ENCODE measurements at regions of chr13 and their contacts with region 1.

Region 1: DNA sequence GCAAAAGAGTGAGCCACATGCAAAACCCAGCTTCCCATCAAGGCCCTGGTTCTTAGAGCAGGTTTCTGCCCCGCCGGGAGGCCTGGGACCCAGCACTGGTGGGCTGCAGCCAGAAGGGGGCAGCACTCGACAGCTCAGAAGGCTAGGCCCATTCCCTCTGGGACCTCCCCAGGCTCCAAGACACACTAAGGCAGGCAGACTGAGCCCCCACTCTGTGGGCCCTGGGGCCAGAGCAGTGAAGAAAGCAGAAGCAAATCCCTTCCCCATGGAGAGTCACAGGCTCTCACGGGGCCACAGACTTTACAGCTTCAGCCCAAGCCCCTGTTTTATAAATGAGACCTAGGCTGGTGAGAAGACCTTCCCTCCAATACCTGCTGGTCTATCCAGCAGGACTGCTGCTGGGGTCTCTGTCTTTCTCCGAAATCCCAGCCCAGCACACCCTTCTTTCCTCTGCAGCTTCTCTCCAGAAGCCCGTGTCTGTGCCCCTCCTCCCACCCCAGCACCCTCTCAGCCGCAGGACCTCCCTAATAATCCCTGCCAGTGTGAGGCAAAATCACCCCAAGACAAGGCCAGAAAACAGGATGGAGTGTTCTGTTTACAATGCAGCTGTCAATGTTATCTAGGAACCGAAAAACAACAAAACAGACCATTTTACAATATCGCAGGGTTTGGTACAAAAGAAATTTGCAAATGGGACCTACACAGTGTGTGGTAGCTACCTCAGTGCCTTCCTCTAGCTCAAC is 109.3 kb downstream of the ABCC4 start:
- DNase-seq: peak; percentile 66 to 92
- H3K4me3 ChIP-seq: no peak overlapping the region
- H3K4me1 ChIP-seq: no peaks in the 10 kb centered on the region; the same call in 1 of the 2 replicates
- H3K27me3 ChIP-seq: no peaks in the 10 kb centered on the region

Region 2: GRCh38 chr13:95100525-95101433 is 91.2 kb before region 1 on chr13:
- in situ Hi-C with region 1: no loop called
- DNase-seq: peak; percentile 80 to 90
- H3K4me3 ChIP-seq: no peak overlapping the region
- H3K4me1 ChIP-seq: peaks cover 26% of the 10 kb centered on the region
- H3K27me3 ChIP-seq: no peaks in the 10 kb centered on the region

Region 3: DNA sequence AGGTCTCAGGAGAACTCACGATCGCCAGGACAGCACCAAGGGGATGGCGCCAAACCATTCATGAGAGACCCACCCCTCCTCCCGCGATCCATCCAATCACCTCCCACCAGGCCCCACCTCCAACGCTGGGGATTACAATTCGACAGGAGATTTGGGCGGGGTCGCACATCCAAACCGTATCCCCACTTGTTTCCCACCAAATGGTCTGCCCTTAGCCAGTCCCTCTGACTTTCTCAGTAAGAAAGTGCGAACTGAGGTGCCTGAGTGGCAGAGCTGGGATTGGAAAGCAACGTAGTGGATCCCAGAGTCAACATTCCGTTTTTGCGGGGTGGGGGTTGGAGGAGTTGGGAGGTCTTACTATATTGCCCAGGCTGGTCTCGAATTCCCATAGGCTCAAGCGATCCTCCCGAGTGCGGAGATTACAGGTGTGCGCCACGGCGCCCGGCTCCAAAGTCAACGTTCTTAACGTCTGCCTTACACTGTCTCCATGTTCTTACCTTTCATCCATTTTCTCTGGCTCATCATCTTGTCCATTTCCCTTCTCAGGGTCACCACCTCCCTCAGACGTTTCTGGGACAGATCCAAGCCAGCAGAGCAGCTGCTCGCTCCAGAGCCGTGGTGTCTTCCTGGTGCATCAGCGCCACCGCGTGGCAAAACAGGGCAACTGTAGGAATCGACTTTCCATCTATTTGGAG is 212.0 kb after region 1 on chr13:
- in situ Hi-C with region 1: loop called (anchors 5 kb)
- DNase-seq: peak; percentile 75 to 90
- H3K4me3 ChIP-seq: peak overlapping the region; percentile 24
- H3K4me1 ChIP-seq: peaks cover 6% of the 10 kb centered on the region; the same call in 1 of the 2 replicates
- H3K27me3 ChIP-seq: no peaks in the 10 kb centered on the region

Region 4: GRCh38 chr13:95479731-95480130 is 287.7 kb after region 1 on chr13:
- in situ Hi-C with region 1: loop called (anchors 5 kb)
- DNase-seq: no peak
- H3K4me3 ChIP-seq: no peak overlapping the region
- H3K4me1 ChIP-seq: no peaks in the 10 kb centered on the region
- H3K27me3 ChIP-seq: no peaks in the 10 kb centered on the region

Region 5: GRCh38 chr13:95524266-95524901 is 332.4 kb after region 1 on chr13:
- in situ Hi-C with region 1: no loop called
- DNase-seq: no peak
- H3K4me3 ChIP-seq: no peak overlapping the region
- H3K4me1 ChIP-seq: no peaks in the 10 kb centered on the region
- H3K27me3 ChIP-seq: no peaks in the 10 kb centered on the region

Region 6: DNA sequence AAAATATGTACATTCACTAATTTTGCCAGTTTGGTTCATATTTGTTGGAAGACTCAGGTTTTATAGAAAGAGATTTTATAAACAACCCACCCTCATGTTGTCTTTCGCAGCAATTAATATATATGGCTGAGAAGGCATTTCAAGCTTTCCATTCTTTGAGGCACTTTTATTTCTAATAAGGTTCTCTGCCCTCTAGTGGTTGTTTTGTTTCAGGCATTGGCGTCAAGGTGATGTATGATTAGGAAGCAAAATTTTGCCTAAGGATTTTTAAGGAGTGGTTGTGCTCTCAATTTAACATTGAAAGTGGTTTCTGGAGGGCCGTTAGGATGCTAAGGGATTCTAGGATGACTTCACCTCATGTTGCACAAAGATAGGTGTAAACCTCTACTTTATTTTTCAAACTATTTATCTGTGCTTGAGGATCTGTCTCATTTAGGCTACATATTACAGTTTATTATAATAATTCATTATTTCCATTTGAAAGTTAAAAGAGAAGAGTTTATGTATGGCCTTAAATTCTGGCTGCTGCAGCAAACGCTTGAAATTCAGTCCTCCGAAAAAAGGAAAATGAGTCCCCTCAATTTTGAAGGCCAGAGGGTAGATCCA is 1766.4 kb after region 1 on chr13:
- in situ Hi-C with region 1: loop called (anchors 25 kb)
- DNase-seq: peak; percentile 47 to 49
- H3K4me3 ChIP-seq: no peak overlapping the region
- H3K4me1 ChIP-seq: peaks cover 9% of the 10 kb centered on the region
- H3K27me3 ChIP-seq: no peaks in the 10 kb centered on the region

Measured in HAP-1 (cell line).